ENCODE measurements at regions of chr2 and their contacts with region 1.

Region 1: DNA sequence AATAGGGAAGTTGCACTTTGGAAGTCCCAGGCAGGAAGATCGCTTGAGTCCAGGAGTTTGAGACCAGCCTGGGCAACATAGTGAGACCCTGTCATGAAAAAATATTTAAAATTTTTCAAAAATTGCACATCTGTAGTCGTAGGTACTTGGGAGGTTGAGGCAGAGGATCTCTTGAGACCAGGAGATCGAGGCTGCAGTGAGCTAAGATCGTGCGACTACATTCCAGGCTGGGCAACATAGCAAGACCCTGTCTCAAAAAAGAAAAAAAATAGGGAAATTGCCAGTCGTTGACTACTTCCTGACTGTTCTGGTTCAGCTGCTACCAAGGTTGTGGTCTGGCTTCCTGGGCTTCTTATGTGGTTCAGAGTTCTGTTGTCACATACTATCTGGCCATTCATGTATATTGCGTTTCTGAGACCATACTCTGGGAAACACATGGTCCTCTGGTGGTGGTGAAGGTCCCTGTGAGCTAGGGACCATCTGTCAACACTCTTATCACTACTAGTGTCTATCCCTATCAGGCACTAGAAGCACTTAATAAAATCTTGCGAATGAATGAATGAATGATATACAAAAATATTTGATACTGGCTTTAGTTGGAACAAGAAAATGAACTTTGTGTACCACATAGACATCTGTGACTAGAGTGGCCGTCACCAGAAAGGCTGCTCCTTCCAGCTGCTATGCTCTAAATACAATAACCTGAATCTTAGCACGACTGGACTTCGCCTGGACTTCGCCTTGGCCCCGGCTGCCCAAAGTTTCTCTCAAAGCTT is 861 bp upstream of the KLHL23 start:
- DNase-seq: no peak
- H3K4me3 ChIP-seq: peak overlapping the region; percentile 78
- H3K4me3 Mint-ChIP-seq: peak overlapping the region; percentile 95
- H3K27ac Mint-ChIP-seq: peak overlapping the region; percentile 88
- H3K4me1 ChIP-seq: peaks cover 14% of the 10 kb centered on the region
- H3K4me1 Mint-ChIP-seq: peaks cover 5% of the 10 kb centered on the region
- H3K27me3 ChIP-seq: no peaks in the 10 kb centered on the region
- H3K27me3 Mint-ChIP-seq: no peaks in the 10 kb centered on the region
- CTCF ChIP-seq: no peak

Region 2: GRCh38 chr2:169694113-169694903 is 38.5 kb before region 1 on chr2 and contains the starts of genes CFAP210 and PHOSPHO2:
- CTCF ChIA-PET with region 1: no interaction called
- POLR2A ChIA-PET with region 1: interaction called, 3 read pairs
- intact Hi-C with region 1: loop called (anchors 2 kb)
- DNase-seq: peak; percentile 98
- H3K4me3 ChIP-seq: peak within 1 kb of the TSS; percentile 79
- H3K4me3 Mint-ChIP-seq: peak within 1 kb of the TSS; percentile 87
- H3K27ac Mint-ChIP-seq: peak within 1 kb of the TSS; percentile 98
- H3K4me1 ChIP-seq: peaks cover 9% of the 10 kb centered on the region; the same call in 1 of the 2 replicates
- H3K4me1 Mint-ChIP-seq: peaks cover 9% of the 10 kb centered on the region
- H3K27me3 ChIP-seq: no peaks in the 10 kb centered on the region
- H3K27me3 Mint-ChIP-seq: no peaks in the 10 kb centered on the region
- CTCF ChIP-seq: no peak
- total RNA-seq, gene CFAP210: not detected in 2 replicates
- total RNA-seq, gene PHOSPHO2: 5.0 and 5.5 TPM in 2 replicates